Naive thymus-derived CD8-positive, alpha-beta T cell (primary cell): ENCODE measurements at regions of chr19 and their contacts with region 1.

Region 1: GRCh38 chr19:34232566-34233481 is 21.5 kb upstream of the GARRE1 start:
- DNase-seq: no peak
- ATAC-seq: peak; percentile 29 to 46
- H3K4me3 Mint-ChIP-seq: peak overlapping the region in 2 of 10 donors; percentile 41 to 45
- H3K27ac Mint-ChIP-seq: peak overlapping the region; percentile 13 to 90 (median 76)
- H3K4me1 Mint-ChIP-seq: peaks cover 10 to 22% (median 20%) of the 10 kb centered on the region in 4 donors
- H3K27me3 Mint-ChIP-seq: no peaks in the 10 kb centered on the region

Region 2: DNA sequence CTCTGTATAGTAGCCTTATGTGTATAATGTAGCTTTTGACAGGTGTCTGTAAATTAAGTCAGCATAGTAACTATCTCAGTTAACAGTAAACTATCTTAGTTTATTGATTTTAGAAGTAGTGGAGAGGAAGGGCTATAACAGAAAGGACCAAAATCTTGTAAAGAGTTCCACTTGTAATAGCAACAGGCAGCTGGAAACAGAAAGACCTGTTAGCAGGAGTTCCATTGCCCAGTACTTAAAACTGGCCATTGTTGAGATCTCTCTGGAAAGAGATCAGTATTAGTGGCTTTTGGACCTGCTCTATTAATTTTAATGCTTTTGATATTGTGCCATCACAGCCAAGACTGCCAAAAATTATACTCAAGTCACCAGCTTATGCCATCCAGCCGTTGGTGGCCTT is 10.4 kb before region 1 on chr19:
- POLR2A ChIA-PET with region 1: interaction called, 14 read pairs
- DNase-seq: no peak
- ATAC-seq: no peak
- H3K4me3 Mint-ChIP-seq: no peak overlapping the region
- H3K27ac Mint-ChIP-seq: peak overlapping the region in 1 of 10 donors; percentile 63
- H3K4me1 Mint-ChIP-seq: peaks cover 26 to 65% (median 58%) of the 10 kb centered on the region in 4 donors
- H3K27me3 Mint-ChIP-seq: no peaks in the 10 kb centered on the region

Region 3: GRCh38 chr19:34345947-34346351 is 113.1 kb after region 1 on chr19:
- POLR2A ChIA-PET with region 1: no interaction called
- DNase-seq: peak; percentile 37 to 77 (median 62)
- ATAC-seq: peak in 1 of 2 donors; percentile 15
- H3K4me3 Mint-ChIP-seq: no peak overlapping the region
- H3K27ac Mint-ChIP-seq: peak overlapping the region in 5 of 10 donors; percentile 50 to 83 (median 68)
- H3K4me1 Mint-ChIP-seq: peaks cover 13 to 27% (median 22%) of the 10 kb centered on the region in 4 donors
- H3K27me3 Mint-ChIP-seq: no peaks in the 10 kb centered on the region